ENCODE measurements at regions of chr7 and their contacts with region 1.

Region 1: GRCh38 chr7:118492466-118492865 is 268.0 kb downstream of the ANKRD7 start:
- DNase-seq: no peak
- ATAC-seq: no peak

Region 2: DNA sequence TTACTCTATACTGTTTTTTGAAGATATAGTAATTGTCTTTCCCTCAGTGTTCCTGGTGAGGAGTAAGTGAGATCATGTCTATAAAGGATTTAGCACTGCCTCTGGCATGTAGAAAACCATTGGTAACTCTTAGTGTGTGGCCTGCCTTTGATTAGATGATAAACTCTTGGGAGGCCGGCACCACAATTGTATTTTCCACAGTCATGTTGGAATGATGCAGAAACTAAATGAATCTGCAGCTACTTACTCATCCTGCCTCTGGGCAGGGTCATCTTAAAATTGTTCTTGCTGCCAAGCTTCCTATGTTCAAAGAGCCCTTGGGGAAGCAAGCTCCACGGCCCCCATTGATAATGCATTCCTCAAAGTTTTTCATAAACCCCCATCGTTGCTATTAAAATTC is 63.3 kb before region 1 on chr7:
- intact Hi-C with region 1: loop called in 1 of 2 experiments (anchors 10 kb)
- DNase-seq: no peak
- ATAC-seq: no peak

Region 3: DNA sequence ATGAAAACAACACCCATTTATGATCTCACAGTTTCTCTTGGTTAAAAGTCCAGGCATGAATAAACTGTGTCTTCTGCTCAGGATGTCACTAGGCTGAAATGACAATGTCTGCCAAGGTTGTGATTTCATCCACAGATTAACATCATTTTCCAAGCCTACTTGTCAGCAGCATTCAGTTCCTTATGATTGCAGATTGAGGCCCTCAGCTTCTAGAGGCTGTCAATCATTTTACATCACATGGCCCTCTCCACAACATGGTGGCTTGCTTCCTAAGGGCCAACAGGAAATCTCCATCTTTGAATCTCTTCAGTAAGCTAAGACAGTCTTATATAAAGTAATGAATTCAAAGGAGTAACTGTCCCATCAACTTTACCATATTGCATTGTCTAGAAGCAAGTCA is 109.6 kb after region 1 on chr7:
- intact Hi-C with region 1: no loop called
- DNase-seq: no peak
- ATAC-seq: no peak

Region 4: DNA sequence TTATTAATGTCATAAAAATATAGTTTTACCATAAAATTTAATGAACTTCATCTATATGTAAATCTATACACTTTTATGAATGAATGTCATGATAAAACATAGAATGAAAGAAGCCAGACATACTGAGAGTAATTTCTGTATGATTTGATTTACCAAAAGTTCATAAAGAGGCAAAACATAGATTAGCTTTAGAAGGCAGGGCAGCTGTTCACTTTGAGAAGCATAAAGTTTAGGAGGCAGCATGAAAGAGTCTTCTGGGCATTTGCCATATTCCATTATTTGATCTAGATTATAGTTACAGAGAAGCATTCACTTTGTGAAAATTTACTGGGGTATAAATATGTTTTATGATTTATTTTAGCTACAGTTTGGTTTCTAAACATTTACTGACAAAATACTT is 219.2 kb after region 1 on chr7:
- intact Hi-C with region 1: no loop called
- DNase-seq: no peak
- ATAC-seq: no peak

Region 5: GRCh38 chr7:118745927-118746326 is 253.5 kb after region 1 on chr7:
- intact Hi-C with region 1: no loop called
- DNase-seq: no peak
- ATAC-seq: no peak